Transverse colon (tissue), 4 donors: ENCODE measurements at regions of chr10 and their contacts with region 1.

Region 1: DNA sequence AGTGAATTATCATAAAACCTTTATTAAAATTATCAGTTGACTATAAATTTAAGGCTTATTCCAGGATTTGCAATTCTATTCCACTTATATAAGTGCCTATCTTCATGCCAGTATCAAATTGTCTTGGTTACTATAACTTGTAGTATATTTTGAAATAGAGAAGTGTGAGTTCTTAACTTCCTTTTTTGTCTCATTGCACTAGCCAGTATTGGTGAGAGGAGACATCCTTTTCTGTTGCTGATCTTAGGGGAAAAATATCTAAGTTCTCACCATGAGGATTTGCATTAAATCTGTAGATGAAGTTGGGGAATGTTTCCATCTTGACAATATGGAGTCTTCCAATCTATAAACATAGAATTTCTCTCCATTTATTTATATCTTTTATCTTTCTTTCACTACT is 104.2 kb upstream of the MKI67 start:
- DNase-seq: no peak
- H3K4me3 ChIP-seq: no peak overlapping the region
- H3K27ac ChIP-seq: no peak overlapping the region
- H3K4me1 ChIP-seq: no peaks in the 10 kb centered on the region
- H3K27me3 ChIP-seq: no peaks in the 10 kb centered on the region
- CTCF ChIP-seq: no peak
- EP300 ChIP-seq: no peak
- POLR2A ChIP-seq: no peak

Region 2: DNA sequence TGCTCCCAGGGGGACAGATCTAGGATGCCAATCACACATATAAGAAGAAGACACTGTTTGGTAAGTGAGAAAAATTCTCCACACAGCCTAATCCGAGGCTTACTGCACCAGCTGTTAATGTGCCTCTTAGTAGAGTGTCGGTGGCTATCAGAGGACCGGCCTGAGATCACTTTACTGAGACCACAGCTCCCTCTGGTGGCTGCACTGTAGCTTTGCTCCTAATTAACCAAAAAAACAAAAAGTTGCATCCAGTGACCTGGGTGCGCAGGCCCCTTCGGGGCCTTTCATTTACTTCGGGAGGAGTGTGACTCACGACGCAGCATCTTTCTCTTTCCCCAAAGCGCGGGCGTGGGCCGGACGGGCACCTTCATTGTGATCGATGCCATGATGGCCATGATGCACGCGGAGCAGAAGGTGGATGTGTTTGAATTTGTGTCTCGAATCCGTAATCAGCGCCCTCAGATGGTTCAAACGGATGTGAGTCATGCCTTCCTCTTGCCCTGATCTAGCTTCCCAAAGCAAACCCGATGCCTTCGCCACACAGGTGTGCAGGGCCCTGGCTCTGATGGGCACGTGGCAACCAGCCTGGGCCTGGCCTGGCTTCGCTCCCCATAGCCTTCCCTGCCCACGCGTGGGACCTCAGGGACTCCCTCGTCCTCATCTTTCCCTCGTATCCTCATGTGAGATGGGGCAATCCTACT is 160.9 kb before region 1 on chr10:
- in situ Hi-C with region 1: no loop called
- intact Hi-C with region 1: no loop called
- DNase-seq: peak; percentile 80
- H3K4me3 ChIP-seq: no peak overlapping the region
- H3K27ac ChIP-seq: no peak overlapping the region
- H3K4me1 ChIP-seq: peaks cover 0 to 11% (median 0%) of the 10 kb centered on the region in 4 donors
- H3K27me3 ChIP-seq: no peaks in the 10 kb centered on the region
- CTCF ChIP-seq: peak; percentile 79 to 88 (median 83)
- EP300 ChIP-seq: no peak
- POLR2A ChIP-seq: no peak

Region 3: DNA sequence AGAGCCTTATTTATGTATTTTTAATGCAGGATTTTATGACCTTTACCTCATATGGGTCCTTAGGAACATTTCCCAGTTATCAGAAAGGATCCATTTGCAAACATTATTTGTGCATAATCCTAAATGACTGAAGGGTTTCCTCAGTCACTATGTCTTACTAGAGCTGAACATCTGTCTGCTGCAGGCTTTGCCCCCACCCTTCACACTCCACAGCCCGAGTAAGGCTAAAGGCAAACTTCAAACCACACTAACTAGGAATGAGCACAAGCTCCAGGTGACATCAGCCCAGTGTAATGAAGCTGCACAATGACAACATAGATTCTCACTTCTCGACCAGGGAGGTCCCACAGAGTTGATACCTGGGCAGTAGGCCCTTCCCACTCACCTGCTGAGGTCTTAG is 387.1 kb after region 1 on chr10:
- in situ Hi-C with region 1: no loop called
- intact Hi-C with region 1: loop called (anchors 2 kb)
- DNase-seq: no peak
- H3K4me3 ChIP-seq: no peak overlapping the region
- H3K27ac ChIP-seq: no peak overlapping the region
- H3K4me1 ChIP-seq: no peaks in the 10 kb centered on the region
- H3K27me3 ChIP-seq: no peaks in the 10 kb centered on the region
- CTCF ChIP-seq: no peak
- EP300 ChIP-seq: no peak
- POLR2A ChIP-seq: no peak